ENCODE measurements at regions of chr15 and their contacts with region 1.

Region 1: DNA sequence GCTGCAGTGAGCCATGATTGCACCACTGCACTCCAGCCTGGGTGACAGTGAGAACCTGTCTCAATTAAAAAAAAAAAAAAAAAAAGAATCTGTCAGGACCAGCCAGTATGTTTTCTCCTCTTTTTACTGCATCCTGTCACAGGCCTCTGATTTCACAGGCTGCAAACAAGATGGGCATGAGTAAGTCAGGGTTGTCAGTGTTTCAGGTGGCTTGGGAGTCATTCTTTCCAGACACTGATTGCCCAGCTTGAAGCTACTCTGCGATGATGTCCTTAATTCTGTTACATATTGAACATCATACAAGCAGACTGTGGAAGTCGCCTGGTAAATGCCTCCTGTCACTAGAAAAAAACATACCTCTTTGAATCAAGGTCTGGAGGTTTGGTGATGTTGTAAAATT is 18.8 kb downstream of the DIS3L start:
- DNase-seq: no peak

Region 2: GRCh38 chr15:66390678-66391077 is 78.5 kb after region 1 on chr15:
- in situ Hi-C with region 1: loop called (anchors 10 kb)
- DNase-seq: no peak

Region 3: GRCh38 chr15:66497502-66498455 is 185.6 kb after region 1 on chr15 and contains the start of gene SNAPC5:
- in situ Hi-C with region 1: loop called (anchors 10 kb)
- DNase-seq: peak; percentile 92
- total RNA-seq, gene SNAPC5: 17.1 and 18.3 TPM in 2 replicates